ENCODE measurements at regions of chrX and their contacts with region 1.

Region 1: GRCh38 chrX:39174772-39175417 is 373.6 kb downstream of the MID1IP1 start:
- DNase-seq: peak in 1 of 2 donors; percentile 85
- H3K4me3 ChIP-seq: no peak overlapping the region
- H3K27ac ChIP-seq: no peak overlapping the region
- H3K4me1 ChIP-seq: no peaks in the 10 kb centered on the region
- H3K27me3 ChIP-seq: no peaks in the 10 kb centered on the region
- CTCF ChIP-seq: no peak
- POLR2A ChIP-seq: no peak

Region 2: DNA sequence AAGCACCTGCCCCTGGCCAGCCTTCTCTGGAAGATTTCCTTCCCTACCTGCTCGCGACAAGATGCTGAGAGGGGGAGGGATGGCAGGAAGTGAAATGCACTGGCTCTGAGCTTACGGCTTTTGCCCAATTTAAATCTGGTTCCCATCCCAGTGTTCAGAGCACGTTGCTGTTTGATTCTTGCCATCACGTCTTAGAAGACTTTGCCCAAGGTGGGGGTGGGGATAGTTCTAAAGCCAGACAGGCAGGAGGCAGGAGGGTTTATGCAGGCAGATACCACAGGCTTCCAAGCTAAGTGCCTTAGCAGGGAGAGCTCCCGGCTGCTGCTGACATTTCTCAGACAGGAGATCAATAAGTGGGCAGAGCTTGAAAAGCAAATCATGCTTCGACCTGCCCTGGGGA is 20.3 kb after region 1 on chrX:
- intact Hi-C with region 1: loop called (anchors 1 kb)
- DNase-seq: no peak
- H3K4me3 ChIP-seq: no peak overlapping the region
- H3K27ac ChIP-seq: no peak overlapping the region
- H3K4me1 ChIP-seq: no peaks in the 10 kb centered on the region
- H3K27me3 ChIP-seq: no peaks in the 10 kb centered on the region
- CTCF ChIP-seq: no peak
- POLR2A ChIP-seq: no peak